ENCODE measurements at regions of chr2 and their contacts with region 1.

Region 1: DNA sequence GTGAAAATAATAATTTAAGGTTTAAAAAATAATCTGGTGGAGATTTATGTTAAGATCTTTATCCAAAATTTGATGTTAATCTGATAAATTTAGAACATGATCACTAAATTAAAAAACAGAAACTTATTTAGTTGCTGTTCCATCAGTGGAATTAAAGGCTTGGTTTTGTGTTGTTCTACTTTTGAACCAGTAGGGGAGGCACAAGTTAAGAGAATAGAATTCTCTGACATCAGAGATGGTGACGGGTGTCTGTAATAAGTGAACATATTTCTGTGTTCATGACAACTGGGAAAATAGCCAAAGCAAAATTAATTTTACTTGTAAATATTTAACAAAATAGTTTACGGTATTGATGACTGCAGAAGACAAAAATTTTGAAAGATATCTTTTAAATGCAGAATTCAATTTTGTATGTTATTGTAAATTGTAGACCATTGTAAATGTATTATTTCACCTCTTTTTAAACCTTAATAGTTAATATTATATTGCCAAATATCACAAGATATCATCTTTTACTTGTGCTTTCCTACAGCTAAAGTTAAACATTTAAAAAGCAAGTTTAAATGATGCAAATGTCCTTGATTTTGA is 106.0 kb downstream of the UBR3 start:
- DNase-seq: peak in 2 of 9 donors; percentile 6 to 9
- ATAC-seq: no peak
- H3K4me3 ChIP-seq: no peak overlapping the region
- H3K4me3 Mint-ChIP-seq: no peak overlapping the region
- H3K27ac ChIP-seq: no peak overlapping the region
- H3K27ac Mint-ChIP-seq: no peak overlapping the region
- H3K4me1 ChIP-seq: no peaks in the 10 kb centered on the region
- H3K4me1 Mint-ChIP-seq: peaks cover 0 to 9% (median 0%) of the 10 kb centered on the region in 7 donors
- H3K27me3 ChIP-seq: no peaks in the 10 kb centered on the region
- H3K27me3 Mint-ChIP-seq: no peaks in the 10 kb centered on the region

Region 2: GRCh38 chr2:169452080-169452479 is 481.1 kb before region 1 on chr2:
- CTCF ChIA-PET with region 1: no interaction called
- POLR2A ChIA-PET with region 1: no interaction called
- intact Hi-C with region 1: loop called (anchors 1 to 2 kb)
- DNase-seq: no peak
- ATAC-seq: no peak
- H3K4me3 ChIP-seq: no peak overlapping the region
- H3K4me3 Mint-ChIP-seq: no peak overlapping the region
- H3K27ac ChIP-seq: no peak overlapping the region
- H3K27ac Mint-ChIP-seq: no peak overlapping the region
- H3K4me1 ChIP-seq: no peaks in the 10 kb centered on the region
- H3K4me1 Mint-ChIP-seq: no peaks in the 10 kb centered on the region
- H3K27me3 ChIP-seq: no peaks in the 10 kb centered on the region
- H3K27me3 Mint-ChIP-seq: peaks cover 6 to 12% (median 8%) of the 10 kb centered on the region in 5 donors

Measured in naive thymus-derived CD4-positive, alpha-beta T cell (primary cell).